Caco-2 (cell line): ENCODE measurements at regions of chr4 and their contacts with region 1.

Region 1: DNA sequence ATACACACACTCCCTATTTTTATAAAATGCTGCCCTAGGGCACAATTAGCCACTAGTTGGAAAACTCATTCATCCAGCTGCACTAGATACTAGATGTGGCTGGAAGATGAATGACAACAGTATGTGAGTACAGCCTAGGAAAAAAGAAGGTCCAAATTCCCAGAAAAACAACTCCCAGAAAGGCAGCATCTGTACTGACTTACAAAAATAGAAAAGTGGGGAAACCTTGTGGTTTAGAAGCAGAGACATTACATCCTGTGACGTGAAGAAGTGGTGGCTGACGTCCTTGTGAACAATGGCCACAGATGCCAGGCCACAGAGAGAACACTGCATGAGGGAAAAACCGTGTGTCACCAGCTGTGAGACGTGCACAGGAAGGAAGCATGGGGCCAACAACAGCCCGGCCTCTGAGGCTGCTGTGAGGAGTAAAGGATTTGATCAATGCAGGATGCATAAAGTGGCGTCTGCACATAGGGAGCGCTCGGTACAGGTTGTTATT is 81.2 kb downstream of the SPRY1 start:
- DNase-seq: no peak
- H3K4me3 ChIP-seq: no peak overlapping the region
- H3K4me3 Mint-ChIP-seq: peak overlapping the region; percentile 70
- H3K27ac Mint-ChIP-seq: peak overlapping the region; percentile 97
- H3K4me1 ChIP-seq: peaks cover 48% of the 10 kb centered on the region
- H3K4me1 Mint-ChIP-seq: peaks cover 50% of the 10 kb centered on the region
- H3K27me3 ChIP-seq: no peaks in the 10 kb centered on the region
- H3K27me3 Mint-ChIP-seq: no peaks in the 10 kb centered on the region
- CTCF ChIP-seq: no peak

Region 2: DNA sequence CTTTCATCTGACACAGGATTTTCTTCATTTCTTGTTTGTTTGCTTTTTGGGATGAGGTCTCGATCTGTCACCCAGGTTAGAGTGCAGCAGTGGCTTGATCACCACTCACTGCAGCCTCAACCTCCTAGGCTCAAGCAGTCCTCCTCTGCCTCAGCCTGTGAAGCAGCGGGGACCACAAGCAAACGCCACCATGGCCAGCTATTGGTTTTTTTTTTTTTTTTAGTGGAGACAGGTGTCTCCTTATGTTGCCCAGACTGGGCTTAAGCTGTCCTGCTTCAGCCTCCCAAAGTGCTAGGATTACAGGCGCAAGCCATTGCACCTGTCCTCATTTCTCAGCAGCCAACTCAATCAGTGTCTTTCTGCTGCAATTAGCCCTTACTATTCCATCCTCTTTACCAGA is 70.9 kb before region 1 on chr4:
- CTCF ChIA-PET with region 1: no interaction called
- POLR2A ChIA-PET with region 1: no interaction called
- intact Hi-C with region 1: no loop called
- DNase-seq: no peak
- H3K4me3 ChIP-seq: no peak overlapping the region
- H3K4me3 Mint-ChIP-seq: no peak overlapping the region
- H3K27ac Mint-ChIP-seq: no peak overlapping the region
- H3K4me1 ChIP-seq: peaks cover 11% of the 10 kb centered on the region
- H3K4me1 Mint-ChIP-seq: peaks cover 5% of the 10 kb centered on the region
- H3K27me3 ChIP-seq: no peaks in the 10 kb centered on the region
- H3K27me3 Mint-ChIP-seq: no peaks in the 10 kb centered on the region
- CTCF ChIP-seq: no peak

Region 3: GRCh38 chr4:123418351-123418931 is 59.3 kb before region 1 on chr4:
- CTCF ChIA-PET with region 1: no interaction called
- POLR2A ChIA-PET with region 1: no interaction called
- intact Hi-C with region 1: loop called (anchors 1 kb)
- DNase-seq: peak; percentile 51 to 59
- H3K4me3 ChIP-seq: no peak overlapping the region
- H3K4me3 Mint-ChIP-seq: no peak overlapping the region
- H3K27ac Mint-ChIP-seq: peak overlapping the region; percentile 73
- H3K4me1 ChIP-seq: peaks cover 36% of the 10 kb centered on the region
- H3K4me1 Mint-ChIP-seq: peaks cover 25% of the 10 kb centered on the region
- H3K27me3 ChIP-seq: no peaks in the 10 kb centered on the region
- H3K27me3 Mint-ChIP-seq: no peaks in the 10 kb centered on the region
- CTCF ChIP-seq: no peak

Region 4: GRCh38 chr4:123505095-123506010 is 27.6 kb after region 1 on chr4:
- CTCF ChIA-PET with region 1: no interaction called
- POLR2A ChIA-PET with region 1: interaction called, 8 read pairs
- intact Hi-C with region 1: loop called (anchors 1 kb)
- DNase-seq: peak; percentile 76 to 80
- H3K4me3 ChIP-seq: peak overlapping the region; percentile 40
- H3K4me3 Mint-ChIP-seq: peak overlapping the region; percentile 79
- H3K27ac Mint-ChIP-seq: peak overlapping the region; percentile 91
- H3K4me1 ChIP-seq: peaks cover 30% of the 10 kb centered on the region
- H3K4me1 Mint-ChIP-seq: peaks cover 13% of the 10 kb centered on the region
- H3K27me3 ChIP-seq: no peaks in the 10 kb centered on the region
- H3K27me3 Mint-ChIP-seq: no peaks in the 10 kb centered on the region
- CTCF ChIP-seq: no peak

Region 5: GRCh38 chr4:123555233-123555806 is 77.6 kb after region 1 on chr4:
- CTCF ChIA-PET with region 1: no interaction called
- POLR2A ChIA-PET with region 1: interaction called, 7 read pairs
- intact Hi-C with region 1: loop called (anchors 1 kb)
- DNase-seq: peak; percentile 90 to 94
- H3K4me3 ChIP-seq: no peak overlapping the region
- H3K4me3 Mint-ChIP-seq: peak overlapping the region; percentile 73
- H3K27ac Mint-ChIP-seq: peak overlapping the region; percentile 95
- H3K4me1 ChIP-seq: peaks cover 56% of the 10 kb centered on the region
- H3K4me1 Mint-ChIP-seq: peaks cover 55% of the 10 kb centered on the region
- H3K27me3 ChIP-seq: no peaks in the 10 kb centered on the region
- H3K27me3 Mint-ChIP-seq: no peaks in the 10 kb centered on the region
- CTCF ChIP-seq: no peak

Region 6: DNA sequence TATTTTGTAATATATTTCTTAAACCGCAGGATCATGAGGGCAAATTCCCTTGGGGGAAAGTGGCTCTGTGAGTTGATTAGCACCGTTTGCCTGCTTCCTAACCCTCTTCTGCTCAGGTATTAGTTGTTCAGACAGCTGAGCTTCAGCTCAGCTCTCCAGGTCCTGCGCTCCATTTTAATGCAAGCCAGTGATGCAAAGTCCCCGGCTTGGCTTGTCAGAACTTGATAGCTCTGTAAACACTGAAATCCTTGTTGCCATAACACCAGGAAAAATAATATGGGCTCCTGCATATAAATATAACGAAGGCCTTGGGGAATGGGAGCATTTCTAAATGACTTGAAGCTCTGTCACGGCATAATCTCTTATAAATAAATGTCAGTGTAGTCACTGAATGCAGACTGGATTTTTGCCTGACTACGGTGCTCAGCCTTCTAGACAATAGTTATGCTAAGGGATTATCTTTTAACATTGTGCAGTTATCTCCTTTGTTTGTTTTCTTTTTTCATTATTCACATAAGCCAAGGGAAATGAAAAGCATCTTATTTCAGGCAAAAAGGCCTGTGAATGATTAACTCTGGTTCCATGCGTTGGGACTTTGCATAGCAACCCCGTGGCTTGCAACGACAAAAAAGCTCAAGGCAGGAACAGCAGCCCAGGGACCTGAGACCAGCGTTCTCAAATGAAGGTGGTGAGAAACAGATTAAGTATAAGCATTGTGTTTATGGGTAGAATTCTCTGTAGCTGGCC is 172.1 kb after region 1 on chr4:
- CTCF ChIA-PET with region 1: no interaction called
- POLR2A ChIA-PET with region 1: no interaction called
- intact Hi-C with region 1: loop called (anchors 1 kb)
- DNase-seq: peak; percentile 70 to 78
- H3K4me3 ChIP-seq: peak overlapping the region; percentile 18
- H3K4me3 Mint-ChIP-seq: peak overlapping the region; percentile 69
- H3K27ac Mint-ChIP-seq: peak overlapping the region; percentile 96
- H3K4me1 ChIP-seq: peaks cover 18% of the 10 kb centered on the region
- H3K4me1 Mint-ChIP-seq: peaks cover 7% of the 10 kb centered on the region
- H3K27me3 ChIP-seq: no peaks in the 10 kb centered on the region
- H3K27me3 Mint-ChIP-seq: no peaks in the 10 kb centered on the region
- CTCF ChIP-seq: no peak

Region 7: GRCh38 chr4:123750044-123750443 is 272.3 kb after region 1 on chr4:
- CTCF ChIA-PET with region 1: no interaction called
- POLR2A ChIA-PET with region 1: no interaction called
- intact Hi-C with region 1: loop called (anchors 2 kb)
- DNase-seq: peak; percentile 62 to 79
- H3K4me3 ChIP-seq: no peak overlapping the region
- H3K4me3 Mint-ChIP-seq: no peak overlapping the region
- H3K27ac Mint-ChIP-seq: peak overlapping the region; percentile 74
- H3K4me1 ChIP-seq: peaks cover 15% of the 10 kb centered on the region
- H3K4me1 Mint-ChIP-seq: peaks cover 13% of the 10 kb centered on the region
- H3K27me3 ChIP-seq: no peaks in the 10 kb centered on the region
- H3K27me3 Mint-ChIP-seq: no peaks in the 10 kb centered on the region
- CTCF ChIP-seq: no peak